Sciatic nerve (tissue), 2 donors: ENCODE measurements at regions of chr17 and their contacts with region 1.

Region 1: GRCh38 chr17:10033959-10034358 is 128.9 kb upstream of the RCVRN start:
- DNase-seq: no peak
- ATAC-seq: peak; percentile 23

Region 2: DNA sequence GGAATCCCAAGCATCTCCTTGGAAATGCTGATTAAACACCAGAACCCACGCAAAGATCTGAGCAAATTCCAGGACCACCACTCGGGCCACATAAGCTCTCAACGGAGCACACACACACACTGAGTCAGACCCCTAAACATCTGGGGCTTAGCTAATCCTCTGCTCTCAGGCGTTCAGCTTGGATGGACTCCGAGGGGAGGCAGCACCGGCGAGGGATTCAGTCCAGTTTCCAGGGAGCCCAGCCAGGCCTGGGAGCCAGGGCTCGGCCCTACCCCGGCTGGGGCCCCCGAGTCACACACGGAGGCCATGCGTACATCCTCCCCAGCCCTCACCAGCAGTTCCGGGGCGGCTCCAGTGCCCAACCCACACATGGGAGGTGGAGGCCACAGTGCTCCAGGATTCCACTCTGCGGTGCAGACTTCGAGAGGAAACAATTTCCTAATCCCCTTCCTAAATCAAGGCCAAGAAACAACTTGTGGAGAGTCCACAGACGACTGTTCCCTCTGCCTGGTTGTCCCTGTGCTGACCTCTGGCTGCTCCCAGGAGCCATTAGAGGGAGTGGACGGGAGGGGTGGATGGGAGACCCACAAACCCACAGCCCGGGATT is 94.0 kb after region 1 on chr17:
- intact Hi-C with region 1: loop called (anchors 10 kb)
- DNase-seq: peak; percentile 89
- ATAC-seq: peak; percentile 90